BJ (cell line): ENCODE measurements at regions of chr6 and their contacts with region 1.

Region 1: DNA sequence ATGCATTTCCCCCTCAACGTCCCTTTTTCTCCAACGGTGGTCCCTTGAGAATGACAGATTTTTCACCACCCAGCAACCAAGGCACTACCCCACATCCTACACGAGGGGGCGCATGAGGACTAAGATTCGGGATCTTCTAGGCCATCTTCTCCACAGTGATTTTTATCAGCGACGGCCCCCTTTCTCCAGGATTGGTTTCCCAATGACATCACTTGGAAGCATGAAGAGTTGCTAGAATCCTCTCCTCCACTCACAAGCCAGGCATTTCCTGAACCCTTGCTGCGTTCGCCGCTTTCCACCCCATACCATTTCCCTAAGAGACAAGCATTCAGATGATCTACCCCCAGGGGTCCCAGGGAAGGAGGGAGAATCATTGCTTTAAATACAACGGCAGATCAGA is 252.0 kb downstream of the HIVEP2 start:
- DNase-seq: peak; percentile 39
- H3K4me3 ChIP-seq: no peak overlapping the region
- H3K27me3 ChIP-seq: no peaks in the 10 kb centered on the region
- CTCF ChIP-seq: peak; percentile 90

Region 2: DNA sequence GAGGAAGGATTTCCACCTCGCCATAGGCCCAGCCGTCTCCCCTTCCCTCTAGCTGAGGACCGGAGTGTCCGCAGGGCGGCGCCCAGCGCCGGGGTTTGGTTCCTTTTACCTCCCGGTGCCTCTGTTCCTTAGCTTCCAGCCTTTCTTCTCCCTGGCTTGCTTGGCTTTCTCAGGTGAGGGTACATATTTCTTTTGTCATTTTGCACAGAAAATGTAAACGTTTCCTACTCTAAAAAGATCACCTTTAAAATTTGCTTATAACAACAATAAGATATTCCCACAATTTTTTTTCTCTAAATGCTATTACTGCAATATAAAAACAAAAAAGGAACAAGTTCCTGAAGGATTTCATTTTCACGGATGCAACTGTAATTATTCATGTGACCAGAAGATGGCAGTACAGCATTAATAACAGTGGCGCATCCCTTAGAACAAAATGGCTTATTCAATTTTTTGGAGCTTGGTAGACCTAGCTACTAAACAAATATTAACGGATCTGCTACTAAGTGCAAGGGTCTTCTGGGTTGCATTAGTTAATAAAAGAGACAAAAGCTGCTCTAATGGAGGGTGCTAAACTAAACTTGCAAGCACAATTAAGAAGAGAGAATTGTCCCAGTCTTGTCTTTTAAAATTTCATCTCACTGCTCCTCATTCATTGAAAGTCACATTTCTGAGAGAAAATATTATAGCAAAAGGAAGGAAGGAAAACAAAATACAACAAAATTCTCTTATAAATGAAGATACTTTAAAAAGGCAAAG is 218.2 kb before region 1 on chr6:
- CTCF ChIA-PET with region 1: interaction called, 14 read pairs
- POLR2A ChIA-PET with region 1: no interaction called
- DNase-seq: no peak
- H3K4me3 ChIP-seq: no peak overlapping the region
- H3K27me3 ChIP-seq: no peaks in the 10 kb centered on the region
- CTCF ChIP-seq: peak; percentile 49

Region 3: DNA sequence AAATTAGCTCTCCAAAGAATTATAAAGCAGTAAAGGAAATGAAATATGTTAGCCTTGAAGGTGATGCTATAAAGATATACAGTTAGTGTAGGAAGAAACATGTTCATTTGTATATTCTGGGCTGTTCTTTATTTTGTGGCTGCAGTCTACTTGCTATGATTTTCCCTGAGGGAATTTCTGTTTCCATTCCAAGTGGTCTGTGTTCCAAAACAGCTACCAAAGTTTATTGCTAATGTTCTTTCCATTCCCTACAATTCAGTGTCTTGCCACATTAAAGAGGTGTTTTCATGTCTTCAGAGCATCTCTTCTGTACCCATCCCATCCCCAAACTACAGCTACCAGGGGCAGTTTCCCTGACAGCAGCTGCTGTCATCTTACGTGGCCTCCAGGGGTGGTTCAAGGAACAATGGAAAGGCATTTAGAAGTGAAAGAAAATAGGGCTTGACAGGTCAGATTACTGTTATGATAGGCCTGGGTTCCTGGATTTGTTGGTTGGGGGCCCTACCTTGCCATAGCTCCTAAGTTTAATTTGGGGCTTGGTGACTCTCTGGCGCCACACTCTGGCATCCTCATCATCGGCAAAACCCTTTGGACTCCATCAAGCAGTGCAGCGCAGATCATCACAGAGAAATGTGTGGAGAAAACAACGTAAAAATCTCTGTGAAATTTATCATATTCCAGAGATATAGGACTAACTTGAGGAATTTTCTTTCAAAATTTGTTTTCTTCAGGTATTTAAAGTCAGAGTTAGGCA is 333.9 kb after region 1 on chr6:
- CTCF ChIA-PET with region 1: interaction called, 17 read pairs
- POLR2A ChIA-PET with region 1: no interaction called
- DNase-seq: no peak
- H3K4me3 ChIP-seq: no peak overlapping the region
- H3K27me3 ChIP-seq: no peaks in the 10 kb centered on the region
- CTCF ChIP-seq: peak; percentile 66

Region 4: GRCh38 chr6:143279385-143279784 is 586.4 kb after region 1 on chr6:
- CTCF ChIA-PET with region 1: interaction called, 13 read pairs
- POLR2A ChIA-PET with region 1: no interaction called
- DNase-seq: no peak
- H3K4me3 ChIP-seq: no peak overlapping the region
- H3K27me3 ChIP-seq: no peaks in the 10 kb centered on the region
- CTCF ChIP-seq: peak; percentile 32; the same call in 1 of the 2 replicates